ENCODE measurements at regions of chr10 and their contacts with region 1.

Region 1: GRCh38 chr10:132588301-132589013 is 50.9 kb downstream of the INPP5A start:
- DNase-seq: peak; percentile 92
- H3K4me3 ChIP-seq: peak overlapping the region in 1 of 3 experiments; percentile 14
- H3K27ac ChIP-seq: peak overlapping the region; percentile 31
- H3K4me1 ChIP-seq: peaks cover 39% of the 10 kb centered on the region
- H3K27me3 ChIP-seq: no peaks in the 10 kb centered on the region
- CTCF ChIP-seq: no peak
- POLR2A ChIP-seq: no peak

Region 2: DNA sequence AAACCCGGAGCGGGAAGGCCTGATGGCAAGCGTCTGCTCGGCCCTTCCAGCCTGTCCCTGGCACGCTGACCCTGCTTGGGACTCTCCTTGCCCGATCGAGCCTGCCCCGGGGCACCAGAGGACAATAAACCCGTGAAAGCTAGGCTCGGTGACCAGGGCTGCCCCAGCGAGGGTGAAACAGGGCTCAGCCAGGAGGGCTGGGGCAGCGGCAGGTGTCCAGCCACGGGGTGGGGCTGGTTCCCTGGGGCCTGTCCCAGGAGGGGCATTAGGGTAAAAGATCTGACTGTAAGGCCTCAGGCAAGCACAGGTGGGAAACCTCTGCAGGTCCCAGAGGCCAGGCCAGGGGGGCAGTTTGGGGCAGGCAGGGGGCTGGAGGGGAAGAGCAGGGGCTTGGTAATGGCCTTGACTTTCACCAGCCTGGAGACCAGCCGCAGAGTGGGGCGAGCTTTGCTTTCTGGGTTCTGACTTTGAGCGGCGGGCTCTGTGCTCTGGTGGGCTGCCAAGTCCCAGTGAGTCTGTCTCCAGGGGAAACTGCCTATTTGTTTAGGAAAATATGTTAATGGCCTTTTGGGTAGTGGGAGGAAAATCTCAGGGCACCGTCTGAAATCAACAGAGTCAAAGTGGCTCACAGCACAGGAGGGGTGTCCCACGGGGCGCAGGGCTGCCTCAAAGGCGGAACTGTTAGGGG is 119.1 kb before region 1 on chr10:
- CTCF ChIA-PET with region 1: no interaction called
- POLR2A ChIA-PET with region 1: no interaction called
- dilution Hi-C with region 1: no loop called
- intact Hi-C with region 1: no loop called
- DNase-seq: peak; percentile 22
- H3K4me3 ChIP-seq: no peak overlapping the region
- H3K27ac ChIP-seq: no peak overlapping the region
- H3K4me1 ChIP-seq: no peaks in the 10 kb centered on the region
- H3K27me3 ChIP-seq: no peaks in the 10 kb centered on the region
- CTCF ChIP-seq: no peak
- POLR2A ChIP-seq: no peak

Region 3: GRCh38 chr10:132627666-132628531 is 39.4 kb after region 1 on chr10:
- CTCF ChIA-PET with region 1: no interaction called
- POLR2A ChIA-PET with region 1: no interaction called
- dilution Hi-C with region 1: no loop called
- intact Hi-C with region 1: loop called (anchors 1 kb)
- DNase-seq: peak; percentile 35
- H3K4me3 ChIP-seq: no peak overlapping the region
- H3K27ac ChIP-seq: no peak overlapping the region
- H3K4me1 ChIP-seq: peaks cover 12% of the 10 kb centered on the region
- H3K27me3 ChIP-seq: no peaks in the 10 kb centered on the region
- CTCF ChIP-seq: no peak
- POLR2A ChIP-seq: no peak